ENCODE measurements at regions of chr7 and their contacts with region 1.

Region 1: DNA sequence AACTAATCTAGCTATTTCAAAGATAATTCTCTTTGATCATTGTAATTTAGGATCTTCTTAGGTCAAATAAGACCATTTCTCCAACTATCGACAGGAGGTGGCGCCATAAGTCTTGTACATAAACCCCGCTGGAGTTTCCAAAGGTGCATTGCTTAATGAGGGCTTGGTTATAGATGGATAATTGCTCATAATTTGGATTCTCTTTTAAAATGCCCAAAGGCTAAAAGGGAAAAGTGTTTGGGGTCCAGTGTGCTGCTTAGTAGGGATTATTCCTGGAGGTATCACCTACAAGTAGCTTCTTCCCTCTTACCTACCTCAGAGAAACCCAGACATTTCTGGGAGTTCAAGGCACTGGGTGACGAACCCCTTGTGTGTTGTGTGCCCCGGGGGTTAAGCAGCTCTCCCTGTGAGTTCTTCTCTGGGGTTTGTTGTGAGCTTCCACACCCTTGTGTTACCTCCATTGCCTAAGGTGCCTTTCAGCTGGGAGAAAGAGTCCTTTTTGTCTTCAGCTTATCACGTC is 75.2 kb downstream of the PAXIP1 start:
- DNase-seq: peak; percentile 66

Region 2: GRCh38 chr7:154879629-154880028 is 48.1 kb before region 1 on chr7:
- CTCF ChIA-PET with region 1: no interaction called
- POLR2A ChIA-PET with region 1: no interaction called
- DNase-seq: no peak

Region 3: DNA sequence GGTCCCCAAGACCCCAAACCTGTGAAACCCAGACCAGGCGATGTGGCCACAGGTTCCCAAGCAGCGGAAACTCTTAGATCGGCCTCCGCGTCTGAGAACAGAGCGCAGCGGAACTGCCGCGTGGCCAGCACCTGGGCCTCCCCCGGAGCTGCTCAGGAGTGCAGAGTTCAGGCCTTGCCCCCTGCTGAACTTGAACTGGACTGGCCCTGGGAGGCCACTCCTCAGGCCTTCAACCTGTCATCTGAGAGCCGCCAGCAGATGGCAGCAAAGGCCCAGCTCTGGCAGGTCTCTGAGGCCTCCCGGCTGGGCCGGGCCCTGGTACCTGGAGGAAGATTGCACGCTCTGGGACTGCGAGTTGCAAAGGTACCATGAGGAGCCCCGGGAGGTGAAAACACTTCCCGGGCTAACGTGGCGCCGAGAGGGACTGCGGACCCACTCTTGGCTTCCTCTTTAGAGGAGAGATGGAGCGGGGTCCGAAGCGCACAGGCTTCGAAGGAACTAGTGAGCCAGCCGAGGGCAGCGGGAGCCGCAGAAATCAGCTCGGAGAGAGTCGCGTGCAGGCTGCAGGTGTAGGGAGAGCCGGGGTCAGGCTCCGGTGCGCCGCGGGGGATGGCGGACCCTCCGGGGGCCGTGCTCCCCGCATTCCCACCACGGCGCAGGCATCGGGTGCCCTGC is 13.9 kb before region 1 on chr7:
- CTCF ChIA-PET with region 1: interaction called, 15 read pairs
- POLR2A ChIA-PET with region 1: no interaction called
- DNase-seq: peak; percentile 93

Region 4: DNA sequence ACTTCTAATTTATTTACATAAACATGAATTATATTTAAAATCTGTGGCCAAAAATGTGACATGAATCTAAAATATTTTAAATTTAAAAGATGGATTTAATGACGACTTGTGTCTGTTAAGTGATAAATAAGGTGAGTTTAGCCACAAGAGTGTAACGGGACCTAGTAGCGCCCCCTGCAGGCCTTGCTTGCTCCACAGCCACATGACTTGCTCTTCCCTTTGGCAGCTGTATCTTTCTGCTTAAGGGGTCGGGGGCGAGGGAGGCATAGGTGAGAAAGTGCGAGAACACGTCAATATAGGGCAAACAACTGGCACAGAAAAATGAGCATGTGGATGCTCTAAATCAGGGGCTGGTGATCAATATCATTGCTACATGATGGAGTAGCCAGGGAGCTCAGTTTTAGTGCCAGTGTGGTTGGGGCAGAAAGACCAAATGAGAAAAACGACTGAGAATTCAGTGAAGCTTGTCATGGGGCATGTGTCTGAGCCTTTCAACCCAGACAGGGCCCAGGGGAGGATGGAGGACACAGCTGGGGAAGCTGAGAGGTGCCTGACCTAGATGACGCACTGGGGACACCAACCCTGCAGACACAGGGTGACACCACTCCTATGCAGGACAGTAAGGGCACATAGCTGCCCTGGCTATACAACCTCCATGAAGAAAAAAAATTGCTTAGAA is 25.5 kb after region 1 on chr7:
- CTCF ChIA-PET with region 1: interaction called, 11 read pairs
- POLR2A ChIA-PET with region 1: interaction called, 7 read pairs
- DNase-seq: peak; percentile 71